Mammary epithelial cell (primary cell): ENCODE measurements at regions of chr16 and their contacts with region 1.

Region 1: GRCh38 chr16:70364399-70364798 is 17.7 kb downstream of the DDX19A start:
- DNase-seq: no peak
- H3K4me3 ChIP-seq: no peak overlapping the region
- H3K27ac ChIP-seq: no peak overlapping the region
- H3K4me1 ChIP-seq: no peaks in the 10 kb centered on the region
- H3K27me3 ChIP-seq: no peaks in the 10 kb centered on the region
- CTCF ChIP-seq: no peak

Region 2: DNA sequence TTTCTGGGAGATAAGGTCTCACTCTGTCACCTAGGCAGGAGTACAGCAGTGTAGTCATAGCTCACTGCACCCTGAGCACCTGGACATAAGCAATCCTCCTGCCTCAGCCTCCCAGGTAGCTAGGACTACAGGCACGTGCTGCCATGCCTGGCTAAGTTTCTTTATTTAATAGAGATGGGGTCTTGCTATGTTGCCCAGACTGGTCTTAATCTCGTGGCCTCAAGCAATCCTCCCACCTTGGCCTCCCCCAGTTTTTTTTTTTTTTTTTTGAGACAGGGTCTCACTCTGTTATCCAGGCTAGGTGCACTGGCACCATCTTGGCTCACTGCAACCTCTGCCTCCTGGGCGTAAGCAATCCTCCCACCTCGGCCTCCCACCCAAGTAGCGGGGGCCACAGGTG is 44.3 kb before region 1 on chr16:
- CTCF ChIA-PET with region 1: no interaction called
- dilution Hi-C with region 1: loop called (anchors 5 kb)
- in situ Hi-C with region 1: no loop called
- intact Hi-C with region 1: no loop called
- DNase-seq: no peak
- H3K4me3 ChIP-seq: no peak overlapping the region
- H3K27ac ChIP-seq: no peak overlapping the region
- H3K4me1 ChIP-seq: no peaks in the 10 kb centered on the region
- H3K27me3 ChIP-seq: no peaks in the 10 kb centered on the region
- CTCF ChIP-seq: no peak

Region 3: GRCh38 chr16:70348991-70349390 is 15.4 kb before region 1 on chr16:
- CTCF ChIA-PET with region 1: no interaction called
- dilution Hi-C with region 1: no loop called
- in situ Hi-C with region 1: no loop called
- intact Hi-C with region 1: no loop called
- DNase-seq: no peak
- H3K4me3 ChIP-seq: no peak overlapping the region
- H3K27ac ChIP-seq: no peak overlapping the region
- H3K4me1 ChIP-seq: peaks cover 11% of the 10 kb centered on the region
- H3K27me3 ChIP-seq: no peaks in the 10 kb centered on the region
- CTCF ChIP-seq: no peak

Region 4: GRCh38 chr16:70410734-70411133 is 46.3 kb after region 1 on chr16:
- CTCF ChIA-PET with region 1: no interaction called
- dilution Hi-C with region 1: loop called (anchors 5 kb)
- in situ Hi-C with region 1: no loop called
- intact Hi-C with region 1: no loop called
- DNase-seq: no peak
- H3K4me3 ChIP-seq: no peak overlapping the region
- H3K27ac ChIP-seq: no peak overlapping the region
- H3K4me1 ChIP-seq: no peaks in the 10 kb centered on the region
- H3K27me3 ChIP-seq: no peaks in the 10 kb centered on the region
- CTCF ChIP-seq: no peak

Region 5: DNA sequence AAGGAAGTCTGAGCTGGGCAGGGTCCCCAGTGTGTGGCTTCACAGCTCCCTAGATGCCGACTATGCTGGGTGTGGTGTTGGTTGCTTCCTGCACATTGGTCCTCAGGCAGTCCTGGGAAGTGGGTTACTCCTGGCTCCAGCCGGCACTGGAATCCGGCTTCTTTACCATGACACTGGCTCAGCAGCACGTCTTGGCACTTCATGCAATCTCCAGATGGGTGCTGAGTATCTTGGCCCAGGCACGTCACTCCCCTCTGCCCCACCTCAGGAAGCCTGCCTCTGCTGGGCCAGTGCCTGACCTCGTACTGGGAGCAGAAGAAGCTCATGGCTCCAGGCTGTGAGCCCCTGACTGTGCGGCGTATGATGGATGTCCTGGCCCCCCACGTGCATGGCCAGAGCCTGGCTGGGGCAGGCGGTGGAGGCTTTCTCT is 114.5 kb after region 1 on chr16:
- CTCF ChIA-PET with region 1: no interaction called
- dilution Hi-C with region 1: loop called (anchors 5 kb)
- in situ Hi-C with region 1: no loop called
- intact Hi-C with region 1: no loop called
- DNase-seq: no peak
- H3K4me3 ChIP-seq: no peak overlapping the region
- H3K27ac ChIP-seq: no peak overlapping the region
- H3K4me1 ChIP-seq: peaks cover 40% of the 10 kb centered on the region
- H3K27me3 ChIP-seq: no peaks in the 10 kb centered on the region
- CTCF ChIP-seq: no peak

Region 6: GRCh38 chr16:70523076-70523742 is 158.8 kb after region 1 on chr16 and contains the start of gene COG4:
- CTCF ChIA-PET with region 1: no interaction called
- dilution Hi-C with region 1: loop called (anchors 10 kb)
- in situ Hi-C with region 1: no loop called
- intact Hi-C with region 1: no loop called
- DNase-seq: peak; percentile 77
- H3K4me3 ChIP-seq: peak within 1 kb of the TSS; percentile 90 to 97 (median 93)
- H3K27ac ChIP-seq: peak within 1 kb of the TSS; percentile 83
- H3K4me1 ChIP-seq: peaks cover 35% of the 10 kb centered on the region
- H3K27me3 ChIP-seq: no peaks in the 10 kb centered on the region
- CTCF ChIP-seq: no peak
- total RNA-seq, gene COG4: 42.7 to 52.0 TPM

Region 7: GRCh38 chr16:70561623-70562022 is 197.2 kb after region 1 on chr16:
- CTCF ChIA-PET with region 1: no interaction called
- dilution Hi-C with region 1: loop called (anchors 10 kb)
- in situ Hi-C with region 1: no loop called
- intact Hi-C with region 1: no loop called
- DNase-seq: peak; percentile 87
- H3K4me3 ChIP-seq: no peak overlapping the region
- H3K27ac ChIP-seq: peak overlapping the region; percentile 27
- H3K4me1 ChIP-seq: peaks cover 19% of the 10 kb centered on the region
- H3K27me3 ChIP-seq: no peaks in the 10 kb centered on the region
- CTCF ChIP-seq: no peak